Mammary epithelial cell (primary cell): ENCODE measurements at regions of chr5 and their contacts with region 1.

Region 1: GRCh38 chr5:148443998-148444397 is 60.2 kb downstream of the FBXO38 start:
- DNase-seq: peak; percentile 46
- H3K4me3 ChIP-seq: no peak overlapping the region
- H3K27ac ChIP-seq: no peak overlapping the region
- H3K4me1 ChIP-seq: no peaks in the 10 kb centered on the region
- H3K27me3 ChIP-seq: no peaks in the 10 kb centered on the region
- CTCF ChIP-seq: peak; percentile 67 to 68

Region 2: DNA sequence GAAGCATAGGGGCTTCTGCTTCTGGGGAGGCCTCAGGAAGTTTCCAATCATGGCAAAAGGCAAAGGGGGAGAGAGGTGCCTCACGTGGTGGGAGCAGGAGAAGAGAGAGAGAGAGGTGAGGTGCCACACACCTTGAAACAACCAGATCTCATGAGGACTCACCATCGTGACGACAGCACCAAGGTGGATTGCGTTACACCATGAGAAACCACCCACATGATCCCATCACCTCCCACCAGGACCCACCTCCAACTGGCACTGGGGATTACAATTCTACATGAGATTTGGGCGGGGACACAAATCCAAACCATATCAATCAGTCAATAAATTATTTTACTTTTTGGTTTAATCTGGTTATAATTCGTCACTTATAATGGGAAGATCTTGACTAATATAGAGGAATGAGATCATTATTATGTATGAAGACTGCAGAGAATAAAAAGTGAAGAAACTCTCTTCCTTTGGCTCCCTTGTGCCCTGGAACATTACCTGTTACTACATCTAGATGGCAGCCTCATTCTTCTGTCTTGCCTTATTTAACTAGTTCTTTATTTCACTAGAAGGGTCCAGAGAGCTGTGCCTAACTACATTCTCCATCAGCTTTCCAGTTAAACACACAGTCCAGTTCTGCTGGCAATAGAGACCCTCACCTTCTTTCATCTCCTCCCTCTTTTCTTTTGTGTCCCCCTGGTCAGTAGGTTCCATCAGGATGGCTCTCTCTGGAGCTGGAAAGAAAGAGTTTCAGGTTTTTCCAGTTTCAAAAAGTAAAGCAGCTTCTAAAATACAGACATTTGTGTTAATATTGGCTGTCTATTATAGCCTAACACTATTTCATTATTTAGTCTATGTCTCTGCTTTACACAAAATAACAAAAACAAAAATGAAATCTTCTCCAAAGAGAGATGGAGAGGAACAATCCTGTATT is 153.5 kb before region 1 on chr5:
- CTCF ChIA-PET with region 1: no interaction called
- dilution Hi-C with region 1: no loop called
- in situ Hi-C with region 1: no loop called
- intact Hi-C with region 1: loop called (anchors 10 kb)
- DNase-seq: peak; percentile 32
- H3K4me3 ChIP-seq: no peak overlapping the region
- H3K27ac ChIP-seq: no peak overlapping the region
- H3K4me1 ChIP-seq: no peaks in the 10 kb centered on the region
- H3K27me3 ChIP-seq: peaks cover 2% of the 10 kb centered on the region
- CTCF ChIP-seq: peak; percentile 64 to 67

Region 3: GRCh38 chr5:148491015-148491792 is 47.2 kb after region 1 on chr5:
- CTCF ChIA-PET with region 1: no interaction called
- dilution Hi-C with region 1: loop called (anchors 5 kb)
- in situ Hi-C with region 1: no loop called
- intact Hi-C with region 1: no loop called
- DNase-seq: no peak
- H3K4me3 ChIP-seq: no peak overlapping the region
- H3K27ac ChIP-seq: no peak overlapping the region
- H3K4me1 ChIP-seq: no peaks in the 10 kb centered on the region
- H3K27me3 ChIP-seq: peaks cover 2% of the 10 kb centered on the region
- CTCF ChIP-seq: no peak

Region 4: DNA sequence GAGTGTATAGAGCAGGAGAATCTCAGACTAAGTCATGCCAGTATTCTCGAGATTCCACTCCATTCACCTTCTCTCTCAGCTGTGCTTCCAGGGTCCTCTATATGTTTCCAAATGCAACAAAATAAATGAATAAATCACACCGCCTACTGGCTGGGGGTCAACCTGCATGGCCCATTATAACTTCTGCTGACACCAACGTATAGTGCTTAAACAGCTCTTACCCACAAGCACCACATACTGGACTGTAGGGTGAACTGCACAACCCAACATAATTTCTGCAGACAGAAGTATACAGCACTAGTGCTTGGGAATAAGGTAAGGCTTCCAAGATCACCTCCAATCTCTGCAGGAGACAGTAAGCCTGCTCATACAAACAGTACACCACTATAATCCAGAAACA is 243.4 kb after region 1 on chr5:
- CTCF ChIA-PET with region 1: no interaction called
- dilution Hi-C with region 1: no loop called
- in situ Hi-C with region 1: no loop called
- intact Hi-C with region 1: loop called (anchors 1 kb)
- DNase-seq: peak; percentile 39
- H3K4me3 ChIP-seq: no peak overlapping the region
- H3K27ac ChIP-seq: no peak overlapping the region
- H3K4me1 ChIP-seq: no peaks in the 10 kb centered on the region
- H3K27me3 ChIP-seq: no peaks in the 10 kb centered on the region
- CTCF ChIP-seq: peak; percentile 73 to 96

Region 5: GRCh38 chr5:149035372-149035790 is 591.4 kb after region 1 on chr5:
- CTCF ChIA-PET with region 1: no interaction called
- dilution Hi-C with region 1: no loop called
- in situ Hi-C with region 1: loop called (anchors 25 kb)
- intact Hi-C with region 1: loop called (anchors 1 kb)
- DNase-seq: peak; percentile 61
- H3K4me3 ChIP-seq: no peak overlapping the region
- H3K27ac ChIP-seq: no peak overlapping the region
- H3K4me1 ChIP-seq: peaks cover 25% of the 10 kb centered on the region
- H3K27me3 ChIP-seq: no peaks in the 10 kb centered on the region
- CTCF ChIP-seq: peak; percentile 88 to 90